ENCODE measurements at regions of chr6 and their contacts with region 1.

Region 1: GRCh38 chr6:116404696-116405095 is 33.9 kb downstream of the DSE start:
- DNase-seq: no peak
- H3K4me3 ChIP-seq: no peak overlapping the region
- H3K27ac ChIP-seq: no peak overlapping the region
- H3K4me1 ChIP-seq: peaks cover 0 to 12% (median 6%) of the 10 kb centered on the region in 4 experiments; a peak in 4 of 7 replicates
- H3K27me3 ChIP-seq: no peaks in the 10 kb centered on the region
- CTCF ChIP-seq: no peak
- EP300 ChIP-seq: no peak
- POLR2A ChIP-seq: no peak
- RAD21 ChIP-seq: no peak

Region 2: GRCh38 chr6:116387374-116387773 is 17.3 kb before region 1 on chr6:
- CTCF ChIA-PET with region 1: interaction called, 15 read pairs
- POLR2A ChIA-PET with region 1: interaction called, 3 read pairs
- DNase-seq: no peak
- H3K4me3 ChIP-seq: no peak overlapping the region
- H3K27ac ChIP-seq: no peak overlapping the region
- H3K4me1 ChIP-seq: peaks cover 3 to 7% (median 6%) of the 10 kb centered on the region in 4 experiments; a peak in 5 of 7 replicates
- H3K27me3 ChIP-seq: no peaks in the 10 kb centered on the region
- CTCF ChIP-seq: no peak
- EP300 ChIP-seq: no peak
- POLR2A ChIP-seq: no peak
- RAD21 ChIP-seq: no peak

Measured in H1 (cell line).